ENCODE measurements at regions of chr7 and their contacts with region 1.

Region 1: DNA sequence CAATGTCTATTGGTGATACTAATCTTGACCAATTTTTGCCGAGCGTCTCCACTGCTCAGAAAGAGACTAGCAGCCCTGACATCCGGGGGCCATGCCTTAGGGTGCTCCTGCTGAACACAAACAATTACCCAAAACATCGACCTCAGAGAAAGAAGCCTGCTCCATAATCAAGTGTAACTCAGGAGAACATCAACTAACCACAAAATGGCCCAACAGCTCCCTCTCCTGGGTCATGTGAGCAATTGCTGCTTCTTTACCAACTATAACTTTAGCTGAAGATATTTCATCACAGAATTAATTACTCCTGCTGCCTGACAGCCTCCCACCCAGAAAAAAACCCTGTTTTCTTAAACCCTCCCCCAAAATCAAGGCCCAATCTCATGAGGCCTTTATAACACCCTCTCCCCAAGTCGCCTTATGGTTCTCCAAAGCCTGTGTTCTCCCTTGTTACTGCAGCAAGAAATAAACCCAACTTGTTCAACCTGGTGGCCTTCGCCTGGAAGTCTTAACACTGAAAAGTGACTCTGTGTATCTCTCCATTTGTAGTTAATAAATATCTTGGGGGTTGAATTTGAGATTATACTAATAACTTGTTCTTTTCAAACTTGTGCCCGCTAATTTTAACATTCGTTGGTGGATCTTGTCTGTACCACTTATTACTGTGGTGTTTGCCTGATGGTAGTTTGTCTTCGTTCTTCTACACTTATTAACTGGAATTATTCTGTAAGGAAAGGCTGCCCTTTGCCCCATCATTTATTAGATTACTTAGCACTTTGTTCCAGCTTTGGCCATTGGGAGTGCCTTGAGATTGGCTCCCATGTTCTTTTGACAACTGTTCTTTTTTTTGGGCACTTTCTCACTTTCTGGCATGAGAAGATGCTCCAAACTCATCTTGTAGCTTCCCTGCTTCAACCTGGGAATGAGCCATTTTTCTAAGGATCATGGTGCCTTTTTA is 21.2 kb upstream of the RAMP3 start:
- DNase-seq: peak in 1 of 2 experiments; percentile 68
- H3K4me3 ChIP-seq: no peak overlapping the region
- H3K4me3 Mint-ChIP-seq: no peak overlapping the region
- H3K27ac Mint-ChIP-seq: no peak overlapping the region
- H3K4me1 ChIP-seq: no peaks in the 10 kb centered on the region
- H3K4me1 Mint-ChIP-seq: no peaks in the 10 kb centered on the region
- H3K27me3 ChIP-seq: no peaks in the 10 kb centered on the region
- H3K27me3 Mint-ChIP-seq: peaks cover 13% of the 10 kb centered on the region
- CTCF ChIP-seq: peak; percentile 80 to 88

Region 2: GRCh38 chr7:44587843-44588711 is 548.3 kb before region 1 on chr7:
- CTCF ChIA-PET with region 1: interaction called, 3 read pairs
- POLR2A ChIA-PET with region 1: no interaction called
- intact Hi-C with region 1: loop called (anchors 1 kb)
- DNase-seq: peak in 1 of 2 experiments; percentile 66
- H3K4me3 ChIP-seq: no peak overlapping the region
- H3K4me3 Mint-ChIP-seq: no peak overlapping the region
- H3K27ac Mint-ChIP-seq: peak overlapping the region; percentile 55
- H3K4me1 ChIP-seq: 0 out of 2 replicates have a peak, but pooled peaks cover 1% of the 10 kb centered on the region
- H3K4me1 Mint-ChIP-seq: peaks cover 5% of the 10 kb centered on the region
- H3K27me3 ChIP-seq: no peaks in the 10 kb centered on the region
- H3K27me3 Mint-ChIP-seq: peaks cover 1% of the 10 kb centered on the region
- CTCF ChIP-seq: peak; percentile 60 to 68

Region 3: DNA sequence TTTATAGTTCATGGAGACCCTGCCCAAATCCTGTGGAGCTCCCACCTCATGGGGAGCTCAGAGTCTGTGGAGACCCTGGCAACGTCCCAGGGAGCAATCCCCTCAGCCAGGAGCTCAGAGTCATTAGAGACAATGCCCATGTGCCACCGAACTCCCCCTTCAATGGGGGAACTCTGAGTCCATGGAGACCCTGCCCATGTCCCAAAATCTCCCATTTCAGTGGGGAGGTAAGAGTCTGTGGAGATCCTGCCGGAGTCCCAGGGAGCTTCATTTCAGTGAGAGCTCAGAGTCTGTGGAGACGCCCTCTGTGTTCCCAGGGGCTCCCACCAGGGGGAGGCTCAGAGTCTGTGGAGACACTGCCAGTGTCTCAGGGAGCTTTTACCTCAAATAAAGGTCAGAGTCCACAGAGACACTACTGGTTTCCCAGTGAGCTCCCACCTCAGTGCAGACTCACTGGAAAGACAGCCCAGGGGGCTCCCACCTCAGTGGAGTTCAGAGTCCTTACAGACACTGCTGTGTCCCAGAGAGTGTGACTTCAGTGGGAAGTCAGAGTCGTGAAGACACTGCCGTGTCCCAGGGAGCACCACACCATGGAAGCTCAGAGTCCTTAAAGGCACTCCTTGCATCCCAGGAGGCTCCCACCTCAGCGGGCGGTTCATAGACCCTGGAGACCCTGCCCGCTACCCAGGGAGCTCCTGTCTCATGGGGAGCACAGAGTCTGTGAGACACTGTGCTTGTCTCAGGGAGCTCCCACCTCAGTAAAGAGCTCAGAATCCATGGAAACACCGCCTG is 162.6 kb before region 1 on chr7:
- CTCF ChIA-PET with region 1: interaction called, 29 read pairs
- POLR2A ChIA-PET with region 1: no interaction called
- intact Hi-C with region 1: loop called (anchors 2 kb)
- DNase-seq: peak; percentile 53 to 59
- H3K4me3 ChIP-seq: no peak overlapping the region
- H3K4me3 Mint-ChIP-seq: no peak overlapping the region
- H3K27ac Mint-ChIP-seq: no peak overlapping the region
- H3K4me1 ChIP-seq: peaks cover 9% of the 10 kb centered on the region; the same call in 1 of the 2 replicates
- H3K4me1 Mint-ChIP-seq: no peaks in the 10 kb centered on the region
- H3K27me3 ChIP-seq: no peaks in the 10 kb centered on the region
- H3K27me3 Mint-ChIP-seq: no peaks in the 10 kb centered on the region
- CTCF ChIP-seq: peak; percentile 44 to 63

Region 4: GRCh38 chr7:45013465-45013967 is 122.9 kb before region 1 on chr7:
- CTCF ChIA-PET with region 1: no interaction called
- POLR2A ChIA-PET with region 1: no interaction called
- intact Hi-C with region 1: no loop called
- DNase-seq: no peak
- H3K4me3 ChIP-seq: no peak overlapping the region
- H3K4me3 Mint-ChIP-seq: no peak overlapping the region
- H3K27ac Mint-ChIP-seq: no peak overlapping the region
- H3K4me1 ChIP-seq: peaks cover 11% of the 10 kb centered on the region
- H3K4me1 Mint-ChIP-seq: peaks cover 8% of the 10 kb centered on the region
- H3K27me3 ChIP-seq: no peaks in the 10 kb centered on the region
- H3K27me3 Mint-ChIP-seq: no peaks in the 10 kb centered on the region
- CTCF ChIP-seq: no peak

Region 5: GRCh38 chr7:45078125-45078681 is 58.2 kb before region 1 on chr7:
- CTCF ChIA-PET with region 1: no interaction called
- POLR2A ChIA-PET with region 1: no interaction called
- intact Hi-C with region 1: loop called (anchors 1 kb)
- DNase-seq: peak in 1 of 2 experiments; percentile 29
- H3K4me3 ChIP-seq: no peak overlapping the region
- H3K4me3 Mint-ChIP-seq: no peak overlapping the region
- H3K27ac Mint-ChIP-seq: no peak overlapping the region
- H3K4me1 ChIP-seq: no peaks in the 10 kb centered on the region
- H3K4me1 Mint-ChIP-seq: no peaks in the 10 kb centered on the region
- H3K27me3 ChIP-seq: no peaks in the 10 kb centered on the region
- H3K27me3 Mint-ChIP-seq: no peaks in the 10 kb centered on the region
- CTCF ChIP-seq: peak in 1 of 2 experiments; percentile 42

Region 6: DNA sequence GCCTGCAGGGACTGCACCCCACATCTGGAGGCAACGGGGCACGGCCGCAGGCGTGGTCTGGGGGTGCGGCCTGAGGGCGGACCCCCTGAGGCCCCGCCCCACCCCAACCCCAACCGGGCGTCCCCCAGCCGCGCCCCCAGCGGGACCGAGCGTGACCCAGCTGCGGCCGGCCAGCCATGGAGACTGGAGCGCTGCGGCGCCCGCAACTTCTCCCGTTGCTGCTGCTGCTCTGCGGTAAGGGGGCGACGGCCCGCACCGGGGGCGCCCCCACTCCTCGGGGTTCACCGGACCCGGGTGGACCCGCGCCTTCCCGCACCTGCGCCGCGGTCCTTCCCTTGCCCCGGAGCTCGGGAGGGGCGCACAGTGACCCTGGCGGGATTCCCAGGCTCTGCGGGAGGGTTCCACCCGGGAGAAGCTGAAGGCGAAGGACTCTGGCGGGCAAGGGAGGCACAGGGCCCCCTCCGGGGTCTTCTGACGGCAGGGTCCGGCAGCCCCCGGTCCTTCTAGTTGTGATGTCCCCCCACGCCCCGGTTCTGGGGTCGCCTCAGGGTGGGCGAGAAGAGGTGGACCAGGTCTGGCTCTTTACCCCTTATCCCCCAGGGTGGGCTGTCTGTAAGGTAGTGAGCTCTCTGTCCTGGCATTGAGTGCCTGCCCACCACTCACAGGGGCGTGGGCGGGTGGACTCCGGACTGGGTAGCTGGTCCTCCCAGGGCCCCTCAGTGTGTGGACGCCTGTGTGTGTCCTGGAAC is 21.4 kb after region 1 on chr7 and contains the start of gene RAMP3:
- CTCF ChIA-PET with region 1: no interaction called
- POLR2A ChIA-PET with region 1: no interaction called
- intact Hi-C with region 1: no loop called
- DNase-seq: no peak
- H3K4me3 ChIP-seq: no peak within 1 kb of the TSS
- H3K4me3 Mint-ChIP-seq: no peak within 1 kb of the TSS
- H3K27ac Mint-ChIP-seq: no peak within 1 kb of the TSS
- H3K4me1 ChIP-seq: no peaks in the 10 kb centered on the region
- H3K4me1 Mint-ChIP-seq: no peaks in the 10 kb centered on the region
- H3K27me3 ChIP-seq: no peaks in the 10 kb centered on the region
- H3K27me3 Mint-ChIP-seq: peaks cover 17% of the 10 kb centered on the region
- CTCF ChIP-seq: no peak
- total RNA-seq, gene RAMP3: not detected in 2 replicates

Measured in Caco-2 (cell line).